Naive thymus-derived CD4-positive, alpha-beta T cell (primary cell): ENCODE measurements at regions of chr6 and their contacts with region 1.

Region 1: DNA sequence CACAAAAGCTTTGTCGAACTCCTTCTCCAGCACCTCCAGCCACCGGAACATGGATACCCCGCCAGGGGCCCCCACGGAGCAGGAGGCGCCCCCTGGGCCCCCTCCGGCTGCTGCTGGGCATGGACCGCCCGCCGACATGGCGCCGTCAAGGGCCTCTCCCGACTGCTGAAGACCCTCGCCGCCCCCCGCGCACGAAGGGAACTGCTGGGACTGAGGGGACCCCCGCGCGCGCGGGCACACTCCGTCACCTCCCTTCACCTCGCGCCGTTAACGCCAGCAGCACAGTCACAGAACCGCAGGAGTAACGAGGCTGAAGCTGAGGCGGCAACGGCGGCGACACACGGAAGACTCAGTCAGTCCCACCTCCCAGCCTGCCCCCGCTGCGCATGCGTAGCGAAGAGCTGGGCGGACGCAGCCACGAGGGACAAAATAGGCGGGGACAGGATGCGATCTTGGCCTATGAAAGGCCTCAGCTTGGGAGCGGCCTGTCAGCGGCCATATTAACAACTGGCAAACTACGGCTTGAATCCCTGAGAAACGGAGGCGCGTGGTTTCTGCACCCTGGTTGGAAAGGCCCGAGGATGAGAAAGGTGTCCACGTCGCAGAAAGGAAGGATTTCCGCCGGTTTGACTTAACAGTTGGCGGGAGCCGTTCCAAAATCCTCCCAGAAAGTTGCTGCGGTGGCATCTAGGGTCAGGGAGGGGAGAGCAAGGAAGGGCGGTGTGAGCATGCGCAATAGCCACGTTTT is at the start of gene GOPC:
- DNase-seq: peak; percentile 87 to 97 (median 96)
- ATAC-seq: peak; percentile 97
- H3K4me3 ChIP-seq: peak within 1 kb of the TSS; percentile 93
- H3K4me3 Mint-ChIP-seq: peak within 1 kb of the TSS; percentile 96 to 100 (median 99)
- H3K27ac ChIP-seq: peak within 1 kb of the TSS; percentile 92
- H3K27ac Mint-ChIP-seq: peak within 1 kb of the TSS; percentile 94 to 99 (median 99)
- H3K4me1 ChIP-seq: peaks cover 0 to 9% of the 10 kb centered on the region in 2 donors
- H3K4me1 Mint-ChIP-seq: peaks cover 24 to 58% (median 49%) of the 10 kb centered on the region in 7 donors
- H3K27me3 ChIP-seq: no peaks in the 10 kb centered on the region
- H3K27me3 Mint-ChIP-seq: peaks cover 0 to 5% (median 4%) of the 10 kb centered on the region in 5 donors
- total RNA-seq, gene GOPC: 16.2 to 39.4 (median 26.5) TPM

Region 2: GRCh38 chr6:116253505-116254296 is 1348.6 kb before region 1 on chr6 and contains the start of gene TSPYL4:
- CTCF ChIA-PET with region 1: no interaction called
- POLR2A ChIA-PET with region 1: no interaction called
- intact Hi-C with region 1: loop called in 1 of 2 experiments (anchors 10 kb)
- DNase-seq: peak; percentile 76 to 96 (median 91)
- ATAC-seq: peak; percentile 97
- H3K4me3 ChIP-seq: peak within 1 kb of the TSS; percentile 80
- H3K4me3 Mint-ChIP-seq: no peak within 1 kb of the TSS
- H3K27ac ChIP-seq: peak within 1 kb of the TSS; percentile 97
- H3K27ac Mint-ChIP-seq: no peak within 1 kb of the TSS
- H3K4me1 ChIP-seq: peaks cover 27 to 36% of the 10 kb centered on the region in 2 donors
- H3K4me1 Mint-ChIP-seq: peaks cover 3 to 43% (median 27%) of the 10 kb centered on the region in 7 donors
- H3K27me3 ChIP-seq: no peaks in the 10 kb centered on the region
- H3K27me3 Mint-ChIP-seq: no peaks in the 10 kb centered on the region
- total RNA-seq, gene TSPYL4: 18.2 to 58.2 (median 21.5) TPM

Region 3: GRCh38 chr6:116680975-116681808 is 921.1 kb before region 1 on chr6 and contains the start of gene KPNA5:
- CTCF ChIA-PET with region 1: no interaction called
- POLR2A ChIA-PET with region 1: no interaction called
- intact Hi-C with region 1: loop called (anchors 1 to 5 kb)
- DNase-seq: peak; percentile 82 to 91 (median 89)
- ATAC-seq: peak; percentile 97
- H3K4me3 ChIP-seq: peak within 1 kb of the TSS; percentile 88
- H3K4me3 Mint-ChIP-seq: peak within 1 kb of the TSS; percentile 94 to 99 (median 98)
- H3K27ac ChIP-seq: peak within 1 kb of the TSS; percentile 85
- H3K27ac Mint-ChIP-seq: peak within 1 kb of the TSS; percentile 96 to 99 (median 97)
- H3K4me1 ChIP-seq: peaks cover 0 to 13% of the 10 kb centered on the region in 2 donors
- H3K4me1 Mint-ChIP-seq: peaks cover 19 to 71% (median 46%) of the 10 kb centered on the region in 7 donors
- H3K27me3 ChIP-seq: no peaks in the 10 kb centered on the region
- H3K27me3 Mint-ChIP-seq: no peaks in the 10 kb centered on the region
- total RNA-seq, gene KPNA5: 11.0 to 78.2 (median 53.2) TPM

Region 4: GRCh38 chr6:117449549-117450439 is 152.5 kb before region 1 on chr6:
- CTCF ChIA-PET with region 1: interaction called, 63 read pairs
- POLR2A ChIA-PET with region 1: interaction called, 11 read pairs
- intact Hi-C with region 1: loop called (anchors 1 kb)
- DNase-seq: peak; percentile 25 to 72 (median 60)
- ATAC-seq: peak; percentile 72
- H3K4me3 ChIP-seq: no peak overlapping the region
- H3K4me3 Mint-ChIP-seq: no peak overlapping the region
- H3K27ac ChIP-seq: no peak overlapping the region
- H3K27ac Mint-ChIP-seq: no peak overlapping the region
- H3K4me1 ChIP-seq: no peaks in the 10 kb centered on the region
- H3K4me1 Mint-ChIP-seq: peaks cover 0 to 5% (median 0%) of the 10 kb centered on the region in 7 donors
- H3K27me3 ChIP-seq: peaks cover 0 to 3% of the 10 kb centered on the region in 2 donors
- H3K27me3 Mint-ChIP-seq: peaks cover 19 to 73% (median 42%) of the 10 kb centered on the region in 5 donors

Region 5: GRCh38 chr6:117585647-117586046 is 16.7 kb before region 1 on chr6:
- CTCF ChIA-PET with region 1: interaction called, 9 read pairs
- POLR2A ChIA-PET with region 1: interaction called, 5 read pairs
- intact Hi-C with region 1: loop called in 1 of 2 experiments (anchors 2 kb)
- DNase-seq: no peak
- ATAC-seq: no peak
- H3K4me3 ChIP-seq: no peak overlapping the region
- H3K4me3 Mint-ChIP-seq: no peak overlapping the region
- H3K27ac ChIP-seq: no peak overlapping the region
- H3K27ac Mint-ChIP-seq: peak overlapping the region in 2 of 9 donors; percentile 9 to 50
- H3K4me1 ChIP-seq: no peaks in the 10 kb centered on the region
- H3K4me1 Mint-ChIP-seq: peaks cover 2 to 77% (median 54%) of the 10 kb centered on the region in 7 donors
- H3K27me3 ChIP-seq: no peaks in the 10 kb centered on the region
- H3K27me3 Mint-ChIP-seq: no peaks in the 10 kb centered on the region

Region 6: GRCh38 chr6:118198746-118199145 is 596.4 kb after region 1 on chr6:
- CTCF ChIA-PET with region 1: no interaction called
- POLR2A ChIA-PET with region 1: no interaction called
- intact Hi-C with region 1: no loop called
- DNase-seq: no peak
- ATAC-seq: no peak
- H3K4me3 ChIP-seq: no peak overlapping the region
- H3K4me3 Mint-ChIP-seq: no peak overlapping the region
- H3K27ac ChIP-seq: no peak overlapping the region
- H3K27ac Mint-ChIP-seq: no peak overlapping the region
- H3K4me1 ChIP-seq: no peaks in the 10 kb centered on the region
- H3K4me1 Mint-ChIP-seq: no peaks in the 10 kb centered on the region
- H3K27me3 ChIP-seq: no peaks in the 10 kb centered on the region
- H3K27me3 Mint-ChIP-seq: peaks cover 0 to 4% (median 0%) of the 10 kb centered on the region in 5 donors

Region 7: DNA sequence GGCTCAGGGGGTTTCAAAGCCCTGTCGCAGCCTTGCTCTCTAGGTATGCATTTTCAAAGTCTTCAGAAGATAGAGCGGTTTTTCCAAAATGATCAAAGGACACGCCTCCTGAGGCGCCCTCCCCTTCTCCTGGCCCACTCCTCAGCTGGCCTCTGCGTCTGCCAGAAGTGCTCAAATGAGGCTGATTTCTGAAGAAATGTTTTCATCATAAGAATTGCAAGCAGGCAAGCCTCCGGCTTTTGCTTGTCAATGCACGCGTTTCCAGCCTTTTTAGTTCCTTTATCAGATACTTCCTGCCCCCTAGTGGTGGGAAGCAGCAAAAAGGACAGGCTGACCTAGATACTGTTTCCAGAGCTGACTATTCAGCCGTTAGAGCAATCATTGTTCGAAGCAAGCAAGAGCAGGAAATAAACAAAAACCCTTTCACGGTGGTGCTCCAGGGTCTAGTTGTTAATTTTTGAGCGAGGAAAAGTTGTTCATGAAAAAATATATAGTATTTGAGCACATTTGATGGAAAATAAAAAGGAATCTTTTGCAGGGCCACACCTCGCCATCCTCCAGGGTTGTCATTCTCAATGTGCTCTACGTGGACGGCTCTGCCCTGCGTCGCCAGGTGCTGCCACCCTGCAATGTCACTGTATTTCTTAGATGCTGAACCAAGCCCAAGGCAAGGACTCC is 1198.2 kb after region 1 on chr6:
- CTCF ChIA-PET with region 1: no interaction called
- POLR2A ChIA-PET with region 1: no interaction called
- intact Hi-C with region 1: loop called (anchors 5 kb)
- DNase-seq: peak; percentile 45 to 90 (median 86)
- ATAC-seq: peak; percentile 95
- H3K4me3 ChIP-seq: peak overlapping the region; percentile 22
- H3K4me3 Mint-ChIP-seq: peak overlapping the region; percentile 14 to 88 (median 68)
- H3K27ac ChIP-seq: no peak overlapping the region
- H3K27ac Mint-ChIP-seq: peak overlapping the region; percentile 73 to 93 (median 86)
- H3K4me1 ChIP-seq: peaks cover 17 to 25% of the 10 kb centered on the region in 2 donors
- H3K4me1 Mint-ChIP-seq: peaks cover 17 to 51% (median 37%) of the 10 kb centered on the region in 7 donors
- H3K27me3 ChIP-seq: no peaks in the 10 kb centered on the region
- H3K27me3 Mint-ChIP-seq: no peaks in the 10 kb centered on the region